ENCODE measurements at regions of chr4 and their contacts with region 1.

Region 1: DNA sequence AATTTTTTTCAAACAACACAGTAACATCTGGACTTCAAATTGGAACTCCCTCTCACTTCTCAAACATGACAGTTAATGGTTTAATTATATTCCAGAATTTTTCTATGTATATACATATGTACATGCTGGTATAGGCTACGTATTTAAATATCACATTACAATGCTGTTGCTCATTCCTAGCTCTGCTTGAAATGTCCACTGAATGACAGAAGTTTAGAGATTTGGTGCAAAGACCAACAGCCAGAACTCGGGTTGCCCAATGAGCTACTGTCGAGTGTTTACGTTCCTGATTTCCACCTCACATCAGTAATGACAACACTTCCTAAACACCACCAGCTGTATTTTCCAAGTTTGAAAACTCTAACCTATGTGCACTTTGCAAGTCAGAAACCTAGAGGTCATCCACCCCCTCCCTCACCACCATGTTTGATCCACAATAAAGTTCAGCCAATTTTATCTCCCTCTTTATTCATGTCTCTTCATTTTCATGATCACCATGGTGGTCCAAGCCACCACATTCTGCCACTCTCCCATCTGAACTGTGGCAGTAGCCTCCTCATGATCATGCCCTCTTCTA is 49.3 kb upstream of the RPL34 start:
- DNase-seq: no peak
- ATAC-seq: no peak
- H3K4me3 Mint-ChIP-seq: no peak overlapping the region
- H3K27ac Mint-ChIP-seq: no peak overlapping the region
- H3K4me1 Mint-ChIP-seq: peaks cover 9% of the 10 kb centered on the region
- H3K27me3 Mint-ChIP-seq: peaks cover 3% of the 10 kb centered on the region

Region 2: GRCh38 chr4:108030332-108030731 is 540.7 kb before region 1 on chr4:
- CTCF ChIA-PET with region 1: interaction called, 36 read pairs
- DNase-seq: peak; percentile 74
- ATAC-seq: peak; percentile 87
- H3K4me3 Mint-ChIP-seq: no peak overlapping the region
- H3K27ac Mint-ChIP-seq: peak overlapping the region; percentile 74
- H3K4me1 Mint-ChIP-seq: peaks cover 30% of the 10 kb centered on the region
- H3K27me3 Mint-ChIP-seq: no peaks in the 10 kb centered on the region

Region 3: GRCh38 chr4:108446556-108446955 is 124.5 kb before region 1 on chr4:
- CTCF ChIA-PET with region 1: no interaction called
- DNase-seq: no peak
- ATAC-seq: no peak
- H3K4me3 Mint-ChIP-seq: no peak overlapping the region
- H3K27ac Mint-ChIP-seq: no peak overlapping the region
- H3K4me1 Mint-ChIP-seq: peaks cover 3% of the 10 kb centered on the region
- H3K27me3 Mint-ChIP-seq: peaks cover 5% of the 10 kb centered on the region

Region 4: DNA sequence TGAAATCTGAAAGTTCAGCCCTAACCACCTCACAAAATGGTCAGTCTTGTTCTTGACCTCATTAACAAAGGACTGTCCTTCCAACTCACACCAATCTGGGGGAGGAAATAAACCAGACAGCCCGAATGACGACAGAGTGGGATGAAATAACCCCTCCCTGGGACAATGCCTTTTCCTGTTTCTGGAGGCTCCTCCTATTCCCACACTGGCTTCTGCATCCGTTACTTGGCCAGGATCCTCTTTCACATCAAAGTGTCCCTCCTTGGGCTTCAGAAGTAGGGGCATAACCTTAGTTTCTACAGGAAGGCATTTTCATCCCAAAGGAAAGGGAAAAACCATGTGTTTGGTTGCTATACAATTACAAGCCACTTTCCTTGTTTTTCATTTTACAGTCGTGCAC is 10.5 kb before region 1 on chr4:
- CTCF ChIA-PET with region 1: interaction called, 13 read pairs
- DNase-seq: no peak
- ATAC-seq: no peak
- H3K4me3 Mint-ChIP-seq: no peak overlapping the region
- H3K27ac Mint-ChIP-seq: no peak overlapping the region
- H3K4me1 Mint-ChIP-seq: no peaks in the 10 kb centered on the region
- H3K27me3 Mint-ChIP-seq: no peaks in the 10 kb centered on the region

Region 5: DNA sequence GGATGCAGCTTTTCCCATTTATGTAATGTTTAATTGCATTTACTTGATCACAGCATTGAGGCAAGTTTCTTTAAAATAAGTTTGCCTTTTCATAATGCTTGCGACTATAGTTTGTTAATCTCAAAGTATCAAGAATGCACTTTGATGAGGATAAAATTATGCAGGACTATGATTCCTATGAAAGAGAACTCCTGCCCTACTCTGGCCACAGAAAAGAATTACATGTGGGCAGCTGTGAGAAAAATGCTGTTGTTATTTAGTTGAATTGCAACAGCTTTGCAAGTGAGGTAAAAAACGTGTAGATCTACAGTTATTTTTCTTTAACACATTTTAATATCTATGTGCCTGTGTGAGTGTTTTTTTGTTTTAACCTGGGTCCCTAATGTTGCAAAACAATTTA is 66.8 kb after region 1 on chr4:
- CTCF ChIA-PET with region 1: no interaction called
- DNase-seq: no peak
- ATAC-seq: no peak
- H3K4me3 Mint-ChIP-seq: no peak overlapping the region
- H3K27ac Mint-ChIP-seq: no peak overlapping the region
- H3K4me1 Mint-ChIP-seq: no peaks in the 10 kb centered on the region
- H3K27me3 Mint-ChIP-seq: no peaks in the 10 kb centered on the region

Region 6: DNA sequence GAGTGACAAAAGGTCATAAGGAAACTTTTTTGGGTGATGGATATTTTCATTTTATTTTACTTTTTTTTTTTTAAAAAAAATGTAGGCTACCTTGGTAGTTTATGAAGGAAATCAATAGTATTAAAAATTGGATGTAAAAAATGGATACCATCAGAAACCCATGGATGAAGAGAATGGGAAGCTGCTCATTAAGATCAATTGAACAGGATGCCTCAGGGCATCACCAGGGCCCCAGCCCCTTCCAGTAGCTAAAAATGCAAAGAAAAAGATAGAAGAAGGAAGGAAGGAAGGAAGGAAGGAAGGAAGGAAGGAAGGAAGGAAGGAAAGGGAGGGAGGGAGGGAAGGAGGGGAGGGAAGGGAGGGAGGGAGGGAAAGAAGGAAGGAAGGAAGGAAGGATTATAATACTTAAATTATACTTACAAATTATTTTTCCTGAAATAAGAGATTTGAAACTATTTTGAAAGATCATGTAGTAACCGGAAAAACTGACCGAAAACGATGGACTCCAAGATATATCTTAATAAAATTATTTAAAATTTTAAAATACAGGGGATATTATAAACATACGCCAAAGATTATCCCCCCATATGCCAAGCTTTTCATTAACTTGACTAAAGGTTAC is 103.4 kb after region 1 on chr4:
- CTCF ChIA-PET with region 1: no interaction called
- DNase-seq: no peak
- ATAC-seq: no peak
- H3K4me3 Mint-ChIP-seq: no peak overlapping the region
- H3K27ac Mint-ChIP-seq: no peak overlapping the region
- H3K4me1 Mint-ChIP-seq: no peaks in the 10 kb centered on the region
- H3K27me3 Mint-ChIP-seq: no peaks in the 10 kb centered on the region

Region 7: GRCh38 chr4:108959491-108959890 is 388.4 kb after region 1 on chr4:
- CTCF ChIA-PET with region 1: no interaction called
- DNase-seq: no peak
- ATAC-seq: no peak
- H3K4me3 Mint-ChIP-seq: no peak overlapping the region
- H3K27ac Mint-ChIP-seq: no peak overlapping the region
- H3K4me1 Mint-ChIP-seq: no peaks in the 10 kb centered on the region
- H3K27me3 Mint-ChIP-seq: peaks cover 35% of the 10 kb centered on the region

Measured in activated CD8-positive, alpha-beta memory T cell treated with anti-CD3 and anti-CD28 coated beads, Interleukin-2, amount 10 ng/mL, durations not matched to agents 7 days and 5 days (primary cell).